ENCODE measurements at regions of chr7 and their contacts with region 1.

Region 1: DNA sequence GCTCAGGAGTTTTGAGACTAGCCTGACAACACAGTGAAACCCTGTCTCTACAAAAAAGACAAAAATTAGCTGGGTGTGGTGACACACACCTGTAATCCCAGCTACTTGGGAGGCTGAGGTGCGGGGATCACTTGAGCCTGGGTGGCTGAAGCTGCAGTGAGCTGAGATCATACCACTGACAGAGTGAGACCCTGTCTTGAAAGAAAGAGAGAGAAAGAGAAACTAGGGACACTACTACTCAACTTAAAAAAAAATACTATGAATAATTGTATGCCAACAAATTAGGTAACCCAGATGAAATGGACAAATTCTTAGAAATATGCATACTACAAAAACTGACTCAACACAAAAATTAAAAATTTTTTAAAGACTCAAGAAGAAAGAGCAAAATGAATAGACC is 28.5 kb downstream of the SMURF1 start:
- DNase-seq: no peak
- H3K4me3 Mint-ChIP-seq: no peak overlapping the region
- H3K27ac Mint-ChIP-seq: no peak overlapping the region
- H3K4me1 Mint-ChIP-seq: peaks cover 49% of the 10 kb centered on the region
- H3K27me3 Mint-ChIP-seq: no peaks in the 10 kb centered on the region

Region 2: GRCh38 chr7:99102809-99103690 is 12.3 kb before region 1 on chr7:
- CTCF ChIA-PET with region 1: no interaction called
- POLR2A ChIA-PET with region 1: no interaction called
- intact Hi-C with region 1: loop called (anchors 1 kb)
- DNase-seq: peak; percentile 76
- H3K4me3 Mint-ChIP-seq: peak overlapping the region; percentile 10
- H3K27ac Mint-ChIP-seq: peak overlapping the region; percentile 73
- H3K4me1 Mint-ChIP-seq: peaks cover 69% of the 10 kb centered on the region
- H3K27me3 Mint-ChIP-seq: no peaks in the 10 kb centered on the region

Region 3: DNA sequence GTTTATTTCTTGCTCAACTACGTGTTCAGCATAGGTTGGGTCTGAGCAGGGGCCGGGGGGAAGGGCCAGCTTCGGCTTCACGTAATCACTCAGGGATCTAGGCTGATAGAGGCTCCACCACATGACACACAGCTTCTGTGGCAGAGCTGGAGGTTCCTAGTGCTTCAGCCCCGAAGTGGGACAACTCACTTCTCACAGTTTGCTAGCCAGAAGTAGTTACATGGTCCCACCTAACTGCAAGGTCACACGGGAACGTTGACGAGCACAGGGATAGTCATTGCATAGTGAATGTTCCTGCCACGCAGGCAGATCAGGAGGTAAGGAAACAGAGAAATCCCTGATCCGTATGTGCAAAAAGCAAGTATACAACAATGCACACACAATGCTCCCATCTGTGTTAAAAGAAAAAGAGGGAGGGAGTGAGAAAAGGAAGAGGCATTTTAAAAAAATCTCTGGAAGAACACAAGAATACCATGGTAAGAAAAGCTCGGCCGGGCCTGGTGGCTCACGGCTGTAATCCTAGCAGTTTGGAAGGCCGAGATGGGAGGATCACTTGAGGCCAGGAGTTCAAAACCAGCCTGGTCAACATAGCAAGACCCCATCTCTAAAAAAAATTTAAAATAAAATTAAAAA is 11.7 kb after region 1 on chr7:
- CTCF ChIA-PET with region 1: no interaction called
- POLR2A ChIA-PET with region 1: no interaction called
- intact Hi-C with region 1: no loop called
- DNase-seq: no peak
- H3K4me3 Mint-ChIP-seq: no peak overlapping the region
- H3K27ac Mint-ChIP-seq: no peak overlapping the region
- H3K4me1 Mint-ChIP-seq: peaks cover 33% of the 10 kb centered on the region
- H3K27me3 Mint-ChIP-seq: no peaks in the 10 kb centered on the region

Region 4: DNA sequence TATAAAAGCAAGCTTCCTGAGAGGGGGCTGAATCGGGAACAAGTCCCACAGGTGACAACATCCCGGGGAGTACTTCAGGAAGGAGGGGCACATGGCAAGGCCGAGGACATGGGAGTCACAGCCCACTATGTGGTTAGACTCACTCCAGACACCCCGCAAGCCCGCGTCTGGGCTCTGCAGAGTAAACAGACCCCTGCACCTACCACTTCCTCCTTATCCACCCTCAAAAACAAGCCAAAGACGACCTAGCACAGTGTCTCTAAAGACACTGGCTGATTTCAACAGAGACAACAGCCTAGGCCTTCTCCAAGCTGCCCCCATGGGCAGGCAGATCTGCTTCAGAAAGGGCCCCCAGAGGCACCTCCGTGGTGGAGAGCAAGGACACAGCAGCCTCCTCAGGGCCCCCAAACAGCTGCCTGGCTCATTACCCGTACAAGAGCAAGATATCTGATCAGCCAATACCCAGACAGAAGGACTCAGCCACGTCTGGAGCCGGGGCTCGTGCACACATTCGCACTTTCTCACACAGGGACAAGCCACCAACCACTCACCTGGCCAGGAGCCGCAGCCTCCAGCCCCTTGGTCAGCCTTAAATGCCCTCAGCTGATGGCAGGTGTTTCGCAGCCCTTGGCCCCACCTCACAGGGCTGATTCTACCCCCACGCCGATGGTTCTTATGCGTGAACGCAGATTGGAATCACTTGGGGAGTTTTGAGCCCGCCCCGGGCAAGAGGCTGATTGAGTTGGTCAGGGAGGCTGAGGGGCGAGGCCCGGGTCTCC is 103.2 kb after region 1 on chr7:
- CTCF ChIA-PET with region 1: no interaction called
- POLR2A ChIA-PET with region 1: no interaction called
- intact Hi-C with region 1: no loop called
- DNase-seq: no peak
- H3K4me3 Mint-ChIP-seq: no peak overlapping the region
- H3K27ac Mint-ChIP-seq: no peak overlapping the region
- H3K4me1 Mint-ChIP-seq: no peaks in the 10 kb centered on the region
- H3K27me3 Mint-ChIP-seq: peaks cover 3% of the 10 kb centered on the region